Heart right ventricle (tissue), 16 donors: ENCODE measurements at regions of chr1 and their contacts with region 1.

Region 1: DNA sequence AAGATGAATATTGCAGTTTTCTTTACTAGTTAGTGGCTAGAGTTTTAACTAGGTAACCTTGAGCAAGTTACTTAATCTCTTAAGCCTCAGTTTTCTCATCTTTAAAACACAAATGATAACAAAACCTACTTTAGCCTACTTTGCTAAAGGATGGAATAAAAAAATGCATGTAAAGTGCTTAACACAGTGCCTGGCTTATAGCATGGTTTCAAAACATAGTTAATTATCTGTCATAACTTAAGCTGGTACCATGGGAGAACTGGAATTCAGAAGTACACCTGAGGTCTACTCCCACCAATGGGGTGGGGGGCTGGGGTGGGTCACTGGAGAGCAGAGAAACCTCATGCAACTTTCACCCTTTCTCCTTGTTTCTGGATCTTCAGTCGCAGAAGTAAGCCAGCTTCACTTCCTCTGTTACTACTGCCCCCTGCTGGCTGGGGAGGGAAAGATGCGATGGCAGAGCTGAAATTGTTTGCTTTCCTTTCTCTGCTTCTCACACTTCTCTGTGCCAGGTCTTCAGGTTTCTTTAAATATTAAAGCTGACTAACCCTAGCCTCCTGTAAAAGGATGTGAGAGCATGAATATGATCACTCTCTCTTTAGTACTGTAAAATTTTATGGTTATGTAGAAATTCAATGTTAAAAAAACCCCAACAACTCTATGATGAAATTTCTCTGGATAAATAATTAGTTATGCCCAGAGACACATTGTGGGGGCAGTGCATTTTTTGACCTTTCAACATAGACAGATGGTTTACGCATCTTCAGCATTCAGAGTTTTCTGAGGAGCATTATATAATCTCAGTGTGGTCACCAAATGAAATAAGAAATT is 324.2 kb downstream of the HLX start:
- DNase-seq: peak; percentile 74 to 85
- ATAC-seq: peak; percentile 44 to 85 (median 74)
- H3K4me3 ChIP-seq: no peak overlapping the region
- H3K27ac ChIP-seq: peak overlapping the region in 9 of 10 donors; percentile 6 to 64 (median 49)
- H3K4me1 ChIP-seq: peaks cover 0 to 37% (median 25%) of the 10 kb centered on the region in 9 donors
- H3K27me3 ChIP-seq: no peaks in the 10 kb centered on the region
- CTCF ChIP-seq: peak; percentile 78 to 94 (median 92)

Region 2: GRCh38 chr1:220803401-220804201 is 399.8 kb before region 1 on chr1:
- intact Hi-C with region 1: loop called in 1 of 10 experiments (anchors 10 kb)
- DNase-seq: peak in 1 of 2 donors; percentile 38
- ATAC-seq: peak in 6 of 8 donors; percentile 55 to 77 (median 58)
- H3K4me3 ChIP-seq: no peak overlapping the region
- H3K27ac ChIP-seq: no peak overlapping the region
- H3K4me1 ChIP-seq: peaks cover 0 to 3% (median 0%) of the 10 kb centered on the region in 9 donors
- H3K27me3 ChIP-seq: no peaks in the 10 kb centered on the region
- CTCF ChIP-seq: peak; percentile 69 to 92 (median 83)

Region 3: GRCh38 chr1:220873868-220874655 is 329.4 kb before region 1 on chr1:
- intact Hi-C with region 1: loop called in 6 of 10 experiments (anchors 2 to 10 kb)
- DNase-seq: peak; percentile 21 to 79
- ATAC-seq: peak in 7 of 8 donors; percentile 3 to 43 (median 38)
- H3K4me3 ChIP-seq: no peak overlapping the region
- H3K27ac ChIP-seq: peak overlapping the region in 4 of 10 donors; percentile 20 to 58 (median 38)
- H3K4me1 ChIP-seq: peaks cover 0 to 55% (median 30%) of the 10 kb centered on the region in 9 donors
- H3K27me3 ChIP-seq: peaks cover 0 to 6% (median 0%) of the 10 kb centered on the region in 7 donors
- CTCF ChIP-seq: peak; percentile 55 to 87 (median 77)

Region 4: GRCh38 chr1:220908757-220909156 is 294.7 kb before region 1 on chr1:
- intact Hi-C with region 1: loop called in 5 of 10 experiments (anchors 5 to 10 kb)
- DNase-seq: no peak
- ATAC-seq: peak in 1 of 8 donors; percentile 20
- H3K4me3 ChIP-seq: no peak overlapping the region
- H3K27ac ChIP-seq: no peak overlapping the region
- H3K4me1 ChIP-seq: peaks cover 0 to 9% (median 0%) of the 10 kb centered on the region in 9 donors
- H3K27me3 ChIP-seq: peaks cover 0 to 5% (median 0%) of the 10 kb centered on the region in 7 donors
- CTCF ChIP-seq: peak; percentile 41 to 77 (median 63)

Region 5: GRCh38 chr1:221435504-221435904 is 232.1 kb after region 1 on chr1:
- intact Hi-C with region 1: loop called in 2 of 10 experiments (anchors 5 to 10 kb)
- DNase-seq: no peak
- ATAC-seq: peak in 7 of 8 donors; percentile 38 to 83 (median 76)
- H3K4me3 ChIP-seq: no peak overlapping the region
- H3K27ac ChIP-seq: peak overlapping the region in 2 of 10 donors; percentile 23 to 38
- H3K4me1 ChIP-seq: peaks cover 0 to 28% (median 8%) of the 10 kb centered on the region in 9 donors
- H3K27me3 ChIP-seq: no peaks in the 10 kb centered on the region
- CTCF ChIP-seq: peak; percentile 87 to 96 (median 95)